ENCODE measurements at regions of chr7 and their contacts with region 1.

Region 1: GRCh38 chr7:151782598-151783448 is 94.1 kb downstream of the PRKAG2 start:
- DNase-seq: peak; percentile 61 to 82 (median 69)
- H3K4me3 ChIP-seq: peak overlapping the region in 1 of 4 donors; percentile 40
- H3K27ac ChIP-seq: no peak overlapping the region
- H3K4me1 ChIP-seq: peaks cover 0 to 8% of the 10 kb centered on the region in 2 donors
- H3K27me3 ChIP-seq: no peaks in the 10 kb centered on the region
- CTCF ChIP-seq: peak; percentile 80 to 90 (median 86)
- POLR2A ChIP-seq: no peak

Region 2: DNA sequence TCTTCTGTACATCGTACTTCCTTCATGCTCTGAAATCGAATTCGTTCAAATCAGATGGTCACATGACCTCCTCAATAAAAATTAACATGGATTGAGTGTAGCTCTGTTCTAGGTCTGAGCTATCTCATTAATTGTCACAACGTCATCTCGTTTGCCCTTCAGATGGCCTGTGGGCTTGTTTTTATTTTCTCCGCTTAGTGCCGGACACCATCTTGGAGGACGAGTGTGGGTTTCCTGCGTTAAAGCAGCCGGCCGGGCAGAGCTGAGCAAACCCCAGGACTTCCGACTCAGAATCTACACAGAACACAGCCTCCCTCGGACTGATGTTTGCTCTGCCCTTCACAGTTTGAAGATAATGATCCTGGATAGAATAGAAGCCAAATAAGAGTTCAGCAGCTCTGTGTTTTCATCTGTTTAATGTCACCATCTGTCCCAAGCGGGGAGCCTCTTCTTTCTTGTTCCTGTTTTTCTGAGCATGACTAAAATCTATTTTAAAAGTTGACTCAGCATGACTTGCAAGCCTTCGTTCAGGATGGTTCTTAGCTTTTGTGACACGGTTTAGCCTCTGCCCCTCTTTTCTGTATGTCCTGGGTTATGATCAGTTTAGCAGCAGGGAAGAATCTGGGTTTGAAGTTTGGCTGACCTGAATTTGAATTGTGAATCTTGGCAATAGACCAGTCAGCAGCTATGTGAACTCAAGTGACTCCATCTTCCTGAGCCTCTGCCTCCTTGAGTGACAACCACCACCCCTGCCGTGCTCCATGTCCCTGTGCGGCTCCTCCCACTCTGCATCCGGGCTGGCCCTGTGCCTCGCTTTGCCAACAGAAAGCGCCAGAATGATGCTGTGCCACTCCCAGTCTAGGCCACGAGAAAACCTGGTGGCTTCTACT is 142.9 kb after region 1 on chr7:
- intact Hi-C with region 1: loop called in 1 of 2 experiments (anchors 5 kb)
- DNase-seq: peak in 6 of 7 donors; percentile 50 to 78 (median 63)
- H3K4me3 ChIP-seq: no peak overlapping the region
- H3K27ac ChIP-seq: peak overlapping the region in 3 of 5 donors; percentile 26 to 79 (median 76)
- H3K4me1 ChIP-seq: peaks cover 0 to 8% of the 10 kb centered on the region in 2 donors
- H3K27me3 ChIP-seq: peaks cover 7% of the 10 kb centered on the region
- CTCF ChIP-seq: no peak
- POLR2A ChIP-seq: no peak

Region 3: DNA sequence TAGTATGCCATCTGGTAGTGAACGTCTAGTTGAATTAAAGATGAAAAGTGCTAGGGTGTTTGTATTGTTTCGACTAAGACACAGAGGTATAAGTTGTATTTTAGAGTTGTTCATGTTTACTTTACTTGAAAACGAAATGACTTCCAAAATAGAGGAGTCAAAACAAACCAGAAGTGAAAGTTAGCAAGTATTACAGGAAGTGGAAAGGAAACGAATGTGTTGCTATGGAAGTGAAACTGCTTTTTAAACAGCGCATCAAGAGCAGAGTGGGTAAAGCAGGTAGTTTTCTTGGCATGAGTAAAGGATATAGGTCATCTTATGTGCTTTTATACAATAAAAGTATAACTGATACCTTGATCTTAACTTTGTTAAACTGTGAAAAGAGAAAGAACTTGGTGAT is 153.4 kb after region 1 on chr7:
- intact Hi-C with region 1: loop called in 1 of 2 experiments (anchors 5 kb)
- DNase-seq: no peak
- H3K4me3 ChIP-seq: no peak overlapping the region
- H3K27ac ChIP-seq: peak overlapping the region in 2 of 5 donors; percentile 22 to 66
- H3K4me1 ChIP-seq: no peaks in the 10 kb centered on the region
- H3K27me3 ChIP-seq: no peaks in the 10 kb centered on the region
- CTCF ChIP-seq: no peak
- POLR2A ChIP-seq: no peak

Region 4: GRCh38 chr7:152202056-152202455 is 419.2 kb after region 1 on chr7:
- intact Hi-C with region 1: no loop called
- DNase-seq: no peak
- H3K4me3 ChIP-seq: no peak overlapping the region
- H3K27ac ChIP-seq: peak overlapping the region in 3 of 5 donors; percentile 29 to 45 (median 30)
- H3K4me1 ChIP-seq: peaks cover 0 to 8% of the 10 kb centered on the region in 2 donors
- H3K27me3 ChIP-seq: no peaks in the 10 kb centered on the region
- CTCF ChIP-seq: no peak
- POLR2A ChIP-seq: no peak